MCF 10A (cell line): ENCODE measurements at regions of chr4 and their contacts with region 1.

Region 1: GRCh38 chr4:151614561-151614960 is 146.2 kb downstream of the GATB start:
- DNase-seq: no peak
- H3K4me3 Mint-ChIP-seq: no peak overlapping the region
- H3K27ac Mint-ChIP-seq: no peak overlapping the region
- H3K4me1 Mint-ChIP-seq: no peaks in the 10 kb centered on the region
- H3K27me3 Mint-ChIP-seq: no peaks in the 10 kb centered on the region
- CTCF ChIP-seq: no peak

Region 2: DNA sequence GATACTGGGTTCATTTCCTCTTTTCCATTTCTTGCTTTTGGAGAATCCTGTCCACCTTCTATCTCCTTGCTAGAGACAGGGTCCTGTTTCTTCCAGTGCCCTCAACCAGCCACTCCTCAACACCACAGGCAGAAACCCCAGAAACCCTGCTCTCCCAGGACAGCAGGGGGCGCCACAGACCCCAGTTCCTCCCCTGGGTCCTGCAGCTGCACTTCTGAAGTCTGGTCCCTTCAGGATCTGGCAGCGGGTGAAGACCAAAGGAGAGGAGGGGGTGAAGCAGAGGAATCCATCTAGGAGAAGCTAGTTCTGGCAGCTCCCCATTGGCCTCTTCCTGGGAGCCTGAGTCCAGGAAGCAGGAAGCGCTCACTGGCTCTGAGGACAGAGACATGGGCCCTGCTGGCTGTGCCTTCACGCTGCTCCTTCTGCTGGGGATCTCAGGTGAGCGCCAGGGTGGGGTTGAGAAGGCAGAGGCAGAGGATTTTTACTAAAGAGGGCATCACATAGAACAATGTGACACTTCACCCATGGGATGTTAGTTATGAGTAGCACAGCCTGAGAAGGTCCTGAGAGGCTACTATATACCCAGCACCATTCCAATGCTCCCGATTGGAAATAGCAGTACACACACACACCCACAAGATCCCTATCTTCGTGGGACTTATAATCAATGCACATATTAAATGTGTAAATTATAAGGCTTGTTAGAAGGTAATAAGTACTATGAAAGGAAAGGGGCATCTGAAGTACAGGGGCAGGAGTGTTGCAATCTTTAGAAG is 337.6 kb before region 1 on chr4 and contains the start of gene PRSS48:
- CTCF ChIA-PET with region 1: interaction called, 5 read pairs
- POLR2A ChIA-PET with region 1: no interaction called
- intact Hi-C with region 1: loop called (anchors 5 kb)
- DNase-seq: peak; percentile 70
- H3K4me3 Mint-ChIP-seq: no peak within 1 kb of the TSS
- H3K27ac Mint-ChIP-seq: peak within 1 kb of the TSS; percentile 57
- H3K4me1 Mint-ChIP-seq: no peaks in the 10 kb centered on the region
- H3K27me3 Mint-ChIP-seq: no peaks in the 10 kb centered on the region
- CTCF ChIP-seq: peak; percentile 80
- total RNA-seq, gene PRSS48: not detected in 2 replicates

Region 3: GRCh38 chr4:151604238-151604637 is 10.3 kb before region 1 on chr4:
- CTCF ChIA-PET with region 1: interaction called, 20 read pairs
- POLR2A ChIA-PET with region 1: interaction called, 3 read pairs
- intact Hi-C with region 1: no loop called
- DNase-seq: peak; percentile 29
- H3K4me3 Mint-ChIP-seq: no peak overlapping the region
- H3K27ac Mint-ChIP-seq: no peak overlapping the region
- H3K4me1 Mint-ChIP-seq: no peaks in the 10 kb centered on the region
- H3K27me3 Mint-ChIP-seq: no peaks in the 10 kb centered on the region
- CTCF ChIP-seq: peak; percentile 58

Region 4: GRCh38 chr4:151658959-151659600 is 44.5 kb after region 1 on chr4:
- CTCF ChIA-PET with region 1: no interaction called
- POLR2A ChIA-PET with region 1: no interaction called
- intact Hi-C with region 1: no loop called
- DNase-seq: no peak
- H3K4me3 Mint-ChIP-seq: no peak overlapping the region
- H3K27ac Mint-ChIP-seq: no peak overlapping the region
- H3K4me1 Mint-ChIP-seq: no peaks in the 10 kb centered on the region
- H3K27me3 Mint-ChIP-seq: no peaks in the 10 kb centered on the region
- CTCF ChIP-seq: no peak

Region 5: GRCh38 chr4:152385551-152385950 is 771.0 kb after region 1 on chr4:
- CTCF ChIA-PET with region 1: no interaction called
- POLR2A ChIA-PET with region 1: no interaction called
- intact Hi-C with region 1: loop called (anchors 5 kb)
- DNase-seq: peak; percentile 18
- H3K4me3 Mint-ChIP-seq: no peak overlapping the region
- H3K27ac Mint-ChIP-seq: peak overlapping the region; percentile 9
- H3K4me1 Mint-ChIP-seq: peaks cover 10% of the 10 kb centered on the region
- H3K27me3 Mint-ChIP-seq: no peaks in the 10 kb centered on the region
- CTCF ChIP-seq: peak; percentile 48